ENCODE measurements at regions of chr1 and their contacts with region 1.

Region 1: GRCh38 chr1:24847995-24848881 is 81.8 kb downstream of the RUNX3 start:
- DNase-seq: peak; percentile 94
- H3K4me3 Mint-ChIP-seq: peak overlapping the region; percentile 70
- H3K27ac Mint-ChIP-seq: no peak overlapping the region
- H3K4me1 Mint-ChIP-seq: peaks cover 7% of the 10 kb centered on the region
- H3K27me3 Mint-ChIP-seq: peaks cover 3% of the 10 kb centered on the region

Region 2: GRCh38 chr1:24830680-24831272 is 17.5 kb before region 1 on chr1:
- CTCF ChIA-PET with region 1: interaction called, 14 read pairs
- intact Hi-C with region 1: no loop called
- DNase-seq: no peak
- H3K4me3 Mint-ChIP-seq: no peak overlapping the region
- H3K27ac Mint-ChIP-seq: no peak overlapping the region
- H3K4me1 Mint-ChIP-seq: no peaks in the 10 kb centered on the region
- H3K27me3 Mint-ChIP-seq: no peaks in the 10 kb centered on the region

Region 3: DNA sequence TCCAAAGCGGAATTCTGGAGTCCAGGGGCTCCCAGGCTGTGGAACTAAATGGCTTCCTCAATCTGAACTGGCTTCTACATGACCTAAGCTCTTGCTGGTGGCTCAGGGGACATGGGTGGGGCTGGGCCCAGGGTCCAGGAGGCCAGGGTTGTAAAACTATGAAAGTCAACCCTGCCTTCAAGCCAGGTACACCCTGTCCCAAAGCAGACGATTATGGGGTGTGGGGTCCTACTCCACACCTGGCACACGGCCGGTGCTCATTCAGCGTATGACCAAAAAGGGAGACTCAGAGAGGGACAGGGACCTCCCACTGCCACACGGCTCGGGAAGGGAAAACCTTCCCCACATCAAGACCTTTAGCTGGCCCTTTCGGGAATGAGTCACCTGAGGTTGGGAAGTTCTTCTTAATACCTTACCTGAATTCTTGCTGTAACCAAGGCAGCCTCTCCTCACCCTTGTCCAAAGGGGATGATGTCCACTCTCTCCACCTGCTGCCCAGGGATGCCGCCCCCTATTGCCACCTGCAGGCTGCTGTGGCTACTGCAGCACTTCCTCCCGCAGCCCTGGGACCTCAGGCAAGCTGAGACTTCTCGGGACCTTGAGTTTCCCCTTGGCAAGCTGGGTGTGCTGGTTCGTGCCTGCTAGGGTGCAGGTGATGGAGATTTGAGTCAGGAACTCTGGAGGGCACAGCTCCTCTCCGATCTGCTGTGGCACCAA is 49.7 kb after region 1 on chr1:
- CTCF ChIA-PET with region 1: interaction called, 8 read pairs
- intact Hi-C with region 1: loop called (anchors 2 kb)
- DNase-seq: peak; percentile 67
- H3K4me3 Mint-ChIP-seq: no peak overlapping the region
- H3K27ac Mint-ChIP-seq: no peak overlapping the region
- H3K4me1 Mint-ChIP-seq: peaks cover 23% of the 10 kb centered on the region
- H3K27me3 Mint-ChIP-seq: no peaks in the 10 kb centered on the region

Region 4: DNA sequence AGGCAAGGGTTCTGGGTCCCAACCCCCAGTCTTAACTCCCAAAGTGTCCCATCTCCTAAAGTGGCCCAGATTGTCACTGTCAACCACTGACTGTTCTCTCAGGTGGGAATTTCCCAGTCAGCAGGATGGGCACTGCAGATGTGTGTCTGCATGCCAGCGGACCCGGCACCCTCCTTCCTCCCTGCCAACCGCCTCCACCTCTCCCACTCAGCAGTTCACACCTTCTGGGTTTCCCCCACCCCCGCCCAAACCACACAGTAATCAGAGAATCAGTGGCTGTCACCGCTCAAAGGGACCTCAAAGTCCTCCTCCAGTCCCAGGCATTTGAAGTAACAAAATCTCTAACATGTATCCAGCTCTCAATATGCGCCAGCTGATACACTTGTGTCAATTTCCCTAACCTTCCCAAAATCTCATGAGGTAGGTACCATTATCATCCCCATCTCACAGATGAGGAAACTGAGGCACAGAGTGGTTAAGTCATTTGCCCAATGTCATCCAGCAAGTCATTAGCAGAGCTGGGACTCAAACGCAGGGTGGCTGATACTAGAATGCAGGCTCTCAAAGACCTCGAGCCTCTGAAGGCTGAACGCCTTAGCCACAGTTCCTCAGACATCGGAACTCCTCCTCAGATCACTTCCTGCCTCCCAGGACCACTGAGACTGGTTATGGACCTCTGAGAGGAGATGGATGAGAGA is 77.0 kb after region 1 on chr1:
- CTCF ChIA-PET with region 1: interaction called, 4 read pairs
- intact Hi-C with region 1: loop called (anchors 1 kb)
- DNase-seq: peak; percentile 93
- H3K4me3 Mint-ChIP-seq: peak overlapping the region; percentile 94
- H3K27ac Mint-ChIP-seq: peak overlapping the region; percentile 77
- H3K4me1 Mint-ChIP-seq: peaks cover 70% of the 10 kb centered on the region
- H3K27me3 Mint-ChIP-seq: no peaks in the 10 kb centered on the region

Region 5: GRCh38 chr1:25099343-25099951 is 251.2 kb after region 1 on chr1:
- CTCF ChIA-PET with region 1: interaction called, 58 read pairs
- intact Hi-C with region 1: loop called (anchors 1 kb)
- DNase-seq: peak; percentile 39
- H3K4me3 Mint-ChIP-seq: no peak overlapping the region
- H3K27ac Mint-ChIP-seq: peak overlapping the region; percentile 25
- H3K4me1 Mint-ChIP-seq: peaks cover 54% of the 10 kb centered on the region
- H3K27me3 Mint-ChIP-seq: no peaks in the 10 kb centered on the region

Region 6: GRCh38 chr1:25148673-25149300 is 300.5 kb after region 1 on chr1:
- CTCF ChIA-PET with region 1: interaction called, 6 read pairs
- intact Hi-C with region 1: loop called (anchors 1 kb)
- DNase-seq: peak; percentile 60
- H3K4me3 Mint-ChIP-seq: no peak overlapping the region
- H3K27ac Mint-ChIP-seq: no peak overlapping the region
- H3K4me1 Mint-ChIP-seq: no peaks in the 10 kb centered on the region
- H3K27me3 Mint-ChIP-seq: peaks cover 3% of the 10 kb centered on the region

Region 7: GRCh38 chr1:25204797-25205480 is 356.7 kb after region 1 on chr1:
- CTCF ChIA-PET with region 1: interaction called, 39 read pairs
- intact Hi-C with region 1: loop called (anchors 1 kb)
- DNase-seq: no peak
- H3K4me3 Mint-ChIP-seq: no peak overlapping the region
- H3K27ac Mint-ChIP-seq: no peak overlapping the region
- H3K4me1 Mint-ChIP-seq: no peaks in the 10 kb centered on the region
- H3K27me3 Mint-ChIP-seq: no peaks in the 10 kb centered on the region